ENCODE measurements at regions of chr1 and their contacts with region 1.

Region 1: GRCh38 chr1:203625628-203626019 is 1.0 kb upstream of the ATP2B4 start:
- DNase-seq: peak; percentile 50 to 80
- ATAC-seq: peak; percentile 75

Region 2: GRCh38 chr1:203504397-203505250 is 121.0 kb before region 1 on chr1:
- intact Hi-C with region 1: loop called in 1 of 2 experiments (anchors 10 kb)
- DNase-seq: peak; percentile 72 to 91
- ATAC-seq: peak; percentile 87

Region 3: DNA sequence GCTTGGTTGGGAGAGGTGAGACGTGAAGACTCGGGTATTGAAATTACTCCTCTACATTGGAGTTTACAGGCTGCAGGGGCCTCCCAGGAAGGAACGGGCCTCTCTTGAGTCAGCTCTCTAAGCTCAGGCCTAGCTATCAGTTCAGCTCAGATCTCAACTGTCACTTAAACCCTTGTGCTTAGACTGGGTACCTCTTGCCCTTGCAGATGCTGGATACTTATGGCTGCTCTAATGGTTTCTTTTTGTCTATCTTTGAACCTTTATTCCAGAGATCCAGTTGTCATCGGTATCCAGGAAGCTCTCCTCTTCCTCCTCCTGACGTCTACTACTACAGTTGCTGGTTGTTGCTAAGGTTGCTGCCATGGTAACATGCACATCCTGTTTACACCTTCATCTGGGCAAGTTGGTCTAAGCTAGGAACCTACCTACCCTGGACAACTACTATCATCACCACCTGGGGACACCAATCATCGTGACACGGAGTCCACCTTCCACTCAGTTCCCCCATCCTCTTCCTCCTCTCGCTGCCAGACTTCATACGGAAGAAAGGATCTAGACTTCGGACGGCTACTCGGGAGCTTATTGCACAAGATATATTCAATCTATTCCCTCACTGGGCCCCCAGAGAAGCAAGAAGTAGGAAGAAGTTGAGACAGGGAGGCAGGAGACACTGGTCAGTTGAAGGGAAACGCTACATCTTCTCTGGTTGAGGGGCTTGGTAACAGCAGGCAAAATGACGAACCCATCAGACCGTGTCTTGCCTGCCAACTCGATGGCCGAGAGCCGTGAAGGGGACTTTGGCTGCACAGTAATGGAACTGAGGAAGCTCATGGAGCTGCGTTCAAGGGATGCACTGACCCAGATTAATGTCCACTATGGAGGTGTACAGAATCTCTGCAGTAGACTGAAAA is 57.1 kb after region 1 on chr1:
- intact Hi-C with region 1: loop called in 1 of 2 experiments (anchors 10 kb)
- DNase-seq: no peak
- ATAC-seq: peak; percentile 31

Region 4: DNA sequence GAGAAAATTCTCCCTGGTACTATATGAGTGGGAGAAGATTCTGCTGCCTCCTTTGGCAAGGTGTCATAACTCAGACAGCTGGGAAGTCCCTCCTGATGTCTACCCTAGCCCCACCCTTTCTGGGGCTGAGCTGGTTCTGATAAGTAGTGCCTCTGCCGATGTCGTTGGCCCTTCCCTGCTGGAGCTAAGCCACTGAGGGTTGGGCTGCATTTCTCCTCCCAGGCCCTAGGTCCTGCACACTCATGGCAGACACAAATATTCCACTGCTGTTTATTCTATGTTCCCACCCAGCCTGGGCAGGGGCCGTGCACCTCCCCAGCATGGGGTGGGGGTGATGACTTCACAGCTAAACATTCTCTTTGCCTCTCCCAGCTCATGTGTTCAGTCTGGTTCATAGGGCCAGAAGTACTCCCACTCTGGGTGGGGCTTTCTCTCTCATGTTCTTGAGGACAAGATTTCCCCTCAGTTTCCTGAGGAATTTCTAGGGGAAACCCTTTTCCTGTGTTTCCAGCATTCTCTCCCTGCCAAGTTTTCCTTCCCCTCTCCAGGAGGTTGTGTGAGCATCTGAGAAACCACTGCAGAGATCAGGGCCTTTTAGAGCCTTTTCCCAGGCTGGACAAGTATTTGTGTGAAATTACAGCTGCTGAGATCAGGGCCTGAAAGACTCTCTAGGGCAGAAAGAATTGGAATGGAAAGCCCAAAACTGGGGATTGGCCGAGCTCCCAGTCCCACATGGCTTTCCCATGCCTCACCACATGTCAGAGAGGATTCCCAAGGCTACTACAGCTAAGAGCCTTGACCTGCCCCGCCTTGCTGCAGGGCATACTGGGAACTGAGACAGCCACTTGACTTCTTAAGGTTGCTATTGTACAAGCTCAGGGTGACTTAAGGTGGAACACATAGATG is 67.2 kb after region 1 on chr1:
- intact Hi-C with region 1: loop called (anchors 10 kb)
- DNase-seq: peak; percentile 66 to 79
- ATAC-seq: peak; percentile 91